ENCODE measurements at regions of chr4 and their contacts with region 1.

Region 1: GRCh38 chr4:105551965-105552746 is at the start of gene ARHGEF38:
- DNase-seq: peak; percentile 47 to 58
- H3K4me3 ChIP-seq: peak within 1 kb of the TSS; percentile 20
- H3K4me3 Mint-ChIP-seq: peak within 1 kb of the TSS; percentile 77
- H3K27ac Mint-ChIP-seq: peak within 1 kb of the TSS; percentile 85
- H3K4me1 ChIP-seq: peaks cover 41% of the 10 kb centered on the region
- H3K4me1 Mint-ChIP-seq: peaks cover 36% of the 10 kb centered on the region
- H3K27me3 ChIP-seq: no peaks in the 10 kb centered on the region
- H3K27me3 Mint-ChIP-seq: no peaks in the 10 kb centered on the region
- CTCF ChIP-seq: no peak
- total RNA-seq, gene ARHGEF38: 3.5 TPM in 2 replicates

Region 2: DNA sequence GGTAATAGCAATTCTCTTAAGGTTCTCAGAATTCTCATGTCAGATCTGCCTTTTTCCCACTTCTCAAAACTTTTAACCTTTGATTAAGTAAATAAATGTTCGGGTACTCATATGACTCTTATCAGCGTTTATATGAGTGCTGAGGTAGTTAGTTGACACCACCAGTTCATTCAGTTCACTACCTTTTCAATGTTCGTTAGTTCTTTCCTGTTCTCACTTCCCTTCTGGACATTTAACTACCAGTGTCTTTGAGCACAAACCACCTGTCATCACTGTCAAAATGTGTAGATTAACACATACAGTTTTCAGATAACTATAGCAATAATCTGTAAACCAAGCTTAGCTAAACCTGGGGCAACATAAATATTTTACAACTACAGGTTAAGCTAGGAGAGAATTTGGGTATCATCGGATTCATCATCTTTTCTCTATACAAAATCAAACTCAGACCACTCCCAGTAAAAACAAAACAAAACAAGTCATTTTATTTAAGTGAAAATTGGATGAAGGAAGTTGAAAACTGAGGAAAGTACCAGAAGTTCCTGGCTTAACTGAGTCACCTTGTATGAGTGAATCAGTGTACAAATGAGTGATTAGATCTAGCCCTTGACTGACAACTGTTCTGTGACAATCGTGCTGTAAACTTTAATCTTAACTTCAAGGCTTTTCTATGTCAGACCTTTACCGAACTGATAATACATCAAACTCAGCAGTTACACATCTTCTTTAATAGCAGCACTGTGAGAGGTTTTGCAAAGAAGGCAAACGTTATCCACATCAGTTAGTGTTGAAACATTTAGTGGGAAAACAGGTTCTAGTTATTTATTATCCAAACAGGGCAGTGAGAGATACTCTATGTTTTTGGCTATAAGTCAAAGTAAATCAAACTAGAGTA is 42.2 kb after region 1 on chr4:
- CTCF ChIA-PET with region 1: no interaction called
- POLR2A ChIA-PET with region 1: no interaction called
- intact Hi-C with region 1: loop called (anchors 2 kb)
- DNase-seq: peak in 1 of 2 experiments; percentile 57
- H3K4me3 ChIP-seq: no peak overlapping the region
- H3K4me3 Mint-ChIP-seq: peak overlapping the region; percentile 47
- H3K27ac Mint-ChIP-seq: peak overlapping the region; percentile 19
- H3K4me1 ChIP-seq: peaks cover 32% of the 10 kb centered on the region
- H3K4me1 Mint-ChIP-seq: peaks cover 18% of the 10 kb centered on the region
- H3K27me3 ChIP-seq: no peaks in the 10 kb centered on the region
- H3K27me3 Mint-ChIP-seq: no peaks in the 10 kb centered on the region
- CTCF ChIP-seq: no peak

Measured in Caco-2 (cell line).